HCT116 (cell line): ENCODE measurements at regions of chr6 and their contacts with region 1.

Region 1: DNA sequence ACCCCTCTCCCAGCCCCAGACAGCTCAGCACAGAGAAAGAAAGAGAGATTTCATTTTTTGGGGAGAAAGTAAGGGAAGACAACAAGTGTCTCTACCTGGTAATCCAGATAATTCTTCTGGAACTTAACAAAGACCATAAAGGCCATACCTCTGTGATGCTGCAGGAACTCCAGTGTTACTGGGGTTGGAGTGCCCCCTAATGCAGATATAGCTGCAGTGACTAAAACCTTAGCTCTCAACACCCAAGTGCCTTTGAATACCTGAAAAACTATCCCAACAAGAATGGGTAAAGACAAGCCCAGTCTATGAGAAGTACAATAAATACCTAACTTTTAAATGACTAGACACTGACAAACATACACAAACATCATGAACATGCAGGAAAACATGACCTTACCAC is 365.3 kb upstream of the PTCHD4 start:
- DNase-seq: no peak
- ATAC-seq: 0 out of 2 replicates have a peak, but pooled peaks have one; percentile 50
- H3K4me3 ChIP-seq: no peak overlapping the region
- H3K27ac ChIP-seq: no peak overlapping the region
- H3K4me1 ChIP-seq: no peaks in the 10 kb centered on the region
- H3K27me3 ChIP-seq: no peaks in the 10 kb centered on the region
- CTCF ChIP-seq: peak; percentile 26 to 32 (median 31); a peak in 4 of 6 replicates
- POLR2A ChIP-seq: no peak
- RAD21 ChIP-seq: peak; percentile 61

Region 2: DNA sequence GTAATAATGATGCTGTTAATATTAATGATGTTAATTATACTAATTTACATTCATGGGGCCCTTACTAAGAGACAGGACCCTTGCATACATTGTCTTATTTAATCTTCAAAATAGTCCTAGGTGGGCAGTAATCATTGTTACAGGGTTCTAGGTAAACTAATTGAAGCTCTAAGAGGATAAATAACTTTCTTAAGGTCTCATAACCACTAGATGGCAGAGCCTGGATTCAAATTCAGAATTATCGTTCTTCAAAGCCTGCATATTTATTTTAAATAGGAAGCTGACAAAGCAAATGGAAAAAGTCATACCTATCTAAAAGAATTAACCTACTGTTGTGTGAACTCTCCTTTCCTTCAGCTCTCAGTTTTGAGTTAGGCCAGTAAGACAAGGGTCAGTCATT is 388.8 kb before region 1 on chr6:
- CTCF ChIA-PET with region 1: interaction called, 21 read pairs
- POLR2A ChIA-PET with region 1: no interaction called
- RAD21 ChIA-PET with region 1: interaction called in 1 of 2 experiments, 3 read pairs
- intact Hi-C with region 1: loop called (anchors 1 kb)
- DNase-seq: peak; percentile 18
- ATAC-seq: no peak
- H3K4me3 ChIP-seq: no peak overlapping the region
- H3K27ac ChIP-seq: no peak overlapping the region
- H3K4me1 ChIP-seq: no peaks in the 10 kb centered on the region
- H3K27me3 ChIP-seq: no peaks in the 10 kb centered on the region
- CTCF ChIP-seq: peak; percentile 25 to 50 (median 48); a peak in 4 of 6 replicates
- POLR2A ChIP-seq: no peak
- RAD21 ChIP-seq: peak; percentile 70